ENCODE measurements at regions of chr1 and their contacts with region 1.

Region 1: DNA sequence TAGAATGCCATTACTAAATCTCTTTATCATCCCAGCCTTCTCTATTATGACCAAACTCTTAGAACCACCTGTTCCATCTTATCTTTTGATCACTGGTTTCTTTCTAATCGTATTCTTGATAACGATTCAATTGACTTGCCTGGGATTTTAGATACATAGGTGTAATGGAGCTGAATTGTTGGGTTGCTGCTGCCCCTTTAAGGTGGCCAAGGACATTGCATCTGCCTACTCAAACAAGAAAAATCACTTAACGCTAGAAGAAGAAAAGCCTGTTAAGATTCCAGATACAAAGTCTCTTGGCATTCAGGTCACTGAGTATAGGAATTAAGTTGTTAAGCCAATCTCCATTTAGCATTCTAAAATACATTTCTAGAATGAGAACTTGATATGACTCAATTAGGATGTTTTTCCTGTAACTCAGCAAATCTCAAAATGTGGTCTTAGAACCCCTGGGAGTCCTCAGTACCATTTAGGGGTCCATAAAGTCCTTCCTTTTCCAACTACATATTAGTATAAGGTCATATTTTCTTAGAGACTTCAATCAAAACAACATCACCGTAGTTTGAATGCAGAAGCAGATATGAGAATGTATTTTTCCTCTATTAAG is 12.4 kb downstream of the NEXN start:
- DNase-seq: peak; percentile 66
- H3K4me3 Mint-ChIP-seq: no peak overlapping the region
- H3K27ac Mint-ChIP-seq: no peak overlapping the region
- H3K4me1 Mint-ChIP-seq: peaks cover 17% of the 10 kb centered on the region
- H3K27me3 Mint-ChIP-seq: no peaks in the 10 kb centered on the region
- CTCF ChIP-seq: peak; percentile 85

Region 2: DNA sequence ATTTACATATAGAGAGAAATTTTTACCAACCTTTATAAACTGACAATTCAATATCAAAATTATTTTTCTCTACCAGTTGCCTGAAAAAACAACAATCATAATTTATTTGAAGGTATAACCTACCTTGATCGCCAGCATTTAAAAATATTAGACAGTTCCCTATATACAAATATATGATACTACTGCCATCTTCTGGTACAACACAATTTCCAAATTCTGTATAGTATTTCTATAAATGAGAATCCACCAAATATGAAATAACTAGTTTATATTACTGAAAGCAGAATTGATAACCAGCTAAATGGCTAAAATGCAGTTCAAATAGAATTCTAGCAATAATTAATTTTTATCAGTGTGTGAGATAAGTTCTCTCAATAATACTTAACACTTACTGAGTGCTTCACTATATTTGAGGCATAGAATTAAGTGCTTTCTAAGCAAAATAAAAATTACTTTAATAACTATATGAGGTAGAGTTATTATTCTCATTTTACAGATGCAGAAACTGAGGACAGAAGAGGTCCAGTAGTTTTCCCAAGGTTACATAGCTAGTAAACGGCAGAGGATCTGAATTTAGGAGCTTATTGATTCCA is 757.2 kb before region 1 on chr1:
- CTCF ChIA-PET with region 1: no interaction called
- POLR2A ChIA-PET with region 1: no interaction called
- intact Hi-C with region 1: loop called (anchors 2 kb)
- DNase-seq: peak; percentile 8
- H3K4me3 Mint-ChIP-seq: no peak overlapping the region
- H3K27ac Mint-ChIP-seq: no peak overlapping the region
- H3K4me1 Mint-ChIP-seq: no peaks in the 10 kb centered on the region
- H3K27me3 Mint-ChIP-seq: no peaks in the 10 kb centered on the region
- CTCF ChIP-seq: peak; percentile 36

Region 3: GRCh38 chr1:77725706-77726105 is 175.1 kb before region 1 on chr1:
- CTCF ChIA-PET with region 1: no interaction called
- POLR2A ChIA-PET with region 1: no interaction called
- intact Hi-C with region 1: loop called (anchors 10 kb)
- DNase-seq: no peak
- H3K4me3 Mint-ChIP-seq: no peak overlapping the region
- H3K27ac Mint-ChIP-seq: no peak overlapping the region
- H3K4me1 Mint-ChIP-seq: peaks cover 4% of the 10 kb centered on the region
- H3K27me3 Mint-ChIP-seq: no peaks in the 10 kb centered on the region
- CTCF ChIP-seq: no peak

Region 4: DNA sequence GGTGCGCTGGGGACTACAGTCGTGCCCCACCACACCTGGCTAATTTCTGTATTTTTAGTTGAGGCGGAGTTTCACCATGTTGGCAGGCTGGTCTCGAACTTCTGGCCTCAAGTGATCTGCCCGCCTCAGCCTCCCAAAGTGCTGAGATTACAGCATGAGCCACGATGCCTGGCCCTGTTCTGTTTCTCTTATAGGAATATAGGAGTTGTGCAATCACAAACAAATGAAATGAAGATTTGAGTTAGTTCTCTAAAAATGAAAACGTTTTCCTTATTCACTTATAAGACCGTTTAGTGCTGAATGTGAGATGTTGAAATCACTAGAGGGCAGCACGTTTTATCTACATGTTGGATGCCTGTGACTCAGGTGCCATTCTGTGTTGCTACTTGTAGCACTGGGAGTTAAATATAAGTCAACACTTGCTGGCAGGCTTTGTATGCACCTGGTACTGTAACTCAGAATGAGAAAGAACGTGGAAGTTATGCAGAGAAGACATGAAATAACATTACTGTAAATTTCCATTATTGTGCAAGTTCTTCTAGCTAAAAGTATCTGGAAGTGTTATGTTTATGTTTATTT is 75.6 kb before region 1 on chr1:
- CTCF ChIA-PET with region 1: interaction called, 24 read pairs
- POLR2A ChIA-PET with region 1: interaction called, 7 read pairs
- intact Hi-C with region 1: loop called (anchors 1 kb)
- DNase-seq: peak; percentile 91
- H3K4me3 Mint-ChIP-seq: peak overlapping the region; percentile 29
- H3K27ac Mint-ChIP-seq: peak overlapping the region; percentile 90
- H3K4me1 Mint-ChIP-seq: peaks cover 6% of the 10 kb centered on the region
- H3K27me3 Mint-ChIP-seq: no peaks in the 10 kb centered on the region
- CTCF ChIP-seq: peak; percentile 24

Region 5: DNA sequence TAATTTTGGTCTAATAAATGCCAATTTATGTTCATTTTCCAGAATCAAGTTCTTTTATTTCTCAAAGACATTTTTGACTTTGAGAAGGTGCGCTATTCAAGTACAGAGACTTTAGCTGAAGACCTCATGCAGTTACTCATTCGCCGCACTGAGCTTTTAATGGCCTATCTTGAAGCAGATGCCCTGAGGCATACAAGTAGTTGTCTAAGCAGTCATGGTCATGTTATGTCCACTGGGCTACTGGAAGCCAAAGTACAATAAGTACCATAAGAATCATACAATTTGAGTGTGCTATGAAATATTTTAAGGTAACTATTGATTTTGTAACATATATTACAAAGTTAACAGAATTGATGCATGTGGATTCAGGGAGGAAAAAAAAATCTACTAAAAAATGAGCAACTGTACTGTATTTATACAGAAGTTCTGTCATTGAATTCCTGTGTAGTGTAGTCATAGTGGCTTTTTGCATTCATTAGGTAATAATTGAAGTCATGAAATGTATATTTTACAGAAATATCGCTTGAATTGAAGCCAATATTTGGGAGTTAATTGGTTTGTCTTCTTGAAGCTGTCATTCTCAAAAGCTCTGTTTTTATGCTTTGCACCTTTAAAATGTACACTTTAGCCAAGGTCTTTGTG is 25.9 kb before region 1 on chr1:
- CTCF ChIA-PET with region 1: interaction called, 12 read pairs
- POLR2A ChIA-PET with region 1: no interaction called
- intact Hi-C with region 1: no loop called
- DNase-seq: peak; percentile 79
- H3K4me3 Mint-ChIP-seq: no peak overlapping the region
- H3K27ac Mint-ChIP-seq: peak overlapping the region; percentile 59
- H3K4me1 Mint-ChIP-seq: peaks cover 5% of the 10 kb centered on the region
- H3K27me3 Mint-ChIP-seq: no peaks in the 10 kb centered on the region
- CTCF ChIP-seq: no peak